ENCODE measurements at regions of chr11 and their contacts with region 1.

Region 1: DNA sequence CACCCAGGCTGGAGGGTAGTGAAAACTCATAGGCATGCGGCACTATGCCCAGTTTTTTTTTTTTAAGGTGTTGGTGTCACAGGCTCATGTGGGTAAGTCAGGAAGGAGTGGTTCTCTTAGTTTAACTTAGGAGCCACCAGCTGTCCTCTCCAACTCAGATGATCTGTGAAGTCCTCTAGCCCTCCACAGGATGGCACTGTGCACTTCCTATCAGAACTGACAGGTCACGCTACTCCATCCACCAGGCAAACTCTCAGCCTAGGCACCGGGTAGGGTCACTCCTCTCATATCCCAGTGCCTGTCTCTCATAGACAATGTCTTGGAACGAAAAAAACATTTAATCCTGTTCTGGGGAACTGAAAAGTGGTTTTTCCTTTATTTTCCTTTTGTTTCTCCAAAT is 16.5 kb downstream of the NAP1L4 start:
- DNase-seq: peak in 8 of 9 experiments; percentile 21 to 79 (median 62)
- ATAC-seq: peak; percentile 96
- H3K4me3 ChIP-seq: no peak overlapping the region
- H3K4me3 Mint-ChIP-seq: no peak overlapping the region
- H3K27ac ChIP-seq: no peak overlapping the region
- H3K27ac Mint-ChIP-seq: peak overlapping the region; percentile 73
- H3K4me1 ChIP-seq: peaks cover 25% of the 10 kb centered on the region
- H3K4me1 Mint-ChIP-seq: peaks cover 65% of the 10 kb centered on the region
- H3K27me3 ChIP-seq: no peaks in the 10 kb centered on the region
- H3K27me3 Mint-ChIP-seq: no peaks in the 10 kb centered on the region
- CTCF ChIP-seq: peak; percentile 60

Region 2: GRCh38 chr11:2961080-2961479 is 14.5 kb before region 1 on chr11:
- CTCF ChIA-PET with region 1: interaction called, 15 read pairs
- POLR2A ChIA-PET with region 1: interaction called, 6 read pairs
- intact Hi-C with region 1: no loop called
- DNase-seq: no peak
- ATAC-seq: no peak
- H3K4me3 ChIP-seq: no peak overlapping the region
- H3K4me3 Mint-ChIP-seq: no peak overlapping the region
- H3K27ac ChIP-seq: no peak overlapping the region
- H3K27ac Mint-ChIP-seq: peak overlapping the region; percentile 69
- H3K4me1 ChIP-seq: no peaks in the 10 kb centered on the region
- H3K4me1 Mint-ChIP-seq: peaks cover 32% of the 10 kb centered on the region
- H3K27me3 ChIP-seq: no peaks in the 10 kb centered on the region
- H3K27me3 Mint-ChIP-seq: no peaks in the 10 kb centered on the region
- CTCF ChIP-seq: no peak

Region 3: DNA sequence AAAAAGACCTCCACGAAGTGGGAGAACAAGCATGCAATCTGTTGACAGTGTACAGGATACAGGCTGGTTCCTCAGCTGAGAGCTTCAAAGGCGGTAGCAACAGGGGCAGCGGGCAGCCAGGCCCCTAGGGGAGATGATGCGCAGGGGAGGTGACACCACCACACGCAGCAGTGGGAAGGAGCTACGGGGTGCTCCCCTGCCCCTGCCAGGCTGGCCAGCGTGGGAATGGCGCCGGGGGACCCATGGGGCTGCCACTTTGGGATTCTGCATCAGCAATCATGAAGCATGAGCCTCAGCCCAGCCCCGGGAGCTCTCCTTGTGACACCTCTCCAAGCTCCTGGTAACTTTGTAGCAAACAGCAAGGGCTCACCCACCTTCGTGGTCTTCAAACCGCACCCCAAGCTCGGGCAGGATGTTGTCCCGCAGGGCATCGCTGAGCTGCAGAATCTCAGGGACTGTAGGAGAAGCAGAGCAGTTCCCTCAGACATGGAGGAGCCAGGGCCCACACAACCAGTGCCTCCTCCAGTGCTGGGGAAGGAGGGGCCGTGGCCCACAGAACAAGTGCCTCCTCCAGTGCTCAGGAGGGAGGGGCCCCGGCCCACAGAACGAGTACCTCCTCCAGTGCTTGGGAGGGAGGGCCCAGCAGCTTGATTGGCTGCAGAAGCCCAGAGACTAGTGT is 31.1 kb after region 1 on chr11:
- CTCF ChIA-PET with region 1: interaction called, 19 read pairs
- POLR2A ChIA-PET with region 1: no interaction called
- intact Hi-C with region 1: no loop called
- DNase-seq: peak; percentile 33 to 83 (median 74)
- ATAC-seq: peak; percentile 99
- H3K4me3 ChIP-seq: peak overlapping the region; percentile 45 to 57
- H3K4me3 Mint-ChIP-seq: peak overlapping the region; percentile 89
- H3K27ac ChIP-seq: peak overlapping the region in 1 of 2 experiments; percentile 52
- H3K27ac Mint-ChIP-seq: peak overlapping the region; percentile 91
- H3K4me1 ChIP-seq: peaks cover 46% of the 10 kb centered on the region
- H3K4me1 Mint-ChIP-seq: peaks cover 69% of the 10 kb centered on the region
- H3K27me3 ChIP-seq: no peaks in the 10 kb centered on the region
- H3K27me3 Mint-ChIP-seq: no peaks in the 10 kb centered on the region
- CTCF ChIP-seq: no peak

Measured in CD8-positive, alpha-beta T cell (primary cell).